B cell (primary cell): ENCODE measurements at regions of chr5 and their contacts with region 1.

Region 1: DNA sequence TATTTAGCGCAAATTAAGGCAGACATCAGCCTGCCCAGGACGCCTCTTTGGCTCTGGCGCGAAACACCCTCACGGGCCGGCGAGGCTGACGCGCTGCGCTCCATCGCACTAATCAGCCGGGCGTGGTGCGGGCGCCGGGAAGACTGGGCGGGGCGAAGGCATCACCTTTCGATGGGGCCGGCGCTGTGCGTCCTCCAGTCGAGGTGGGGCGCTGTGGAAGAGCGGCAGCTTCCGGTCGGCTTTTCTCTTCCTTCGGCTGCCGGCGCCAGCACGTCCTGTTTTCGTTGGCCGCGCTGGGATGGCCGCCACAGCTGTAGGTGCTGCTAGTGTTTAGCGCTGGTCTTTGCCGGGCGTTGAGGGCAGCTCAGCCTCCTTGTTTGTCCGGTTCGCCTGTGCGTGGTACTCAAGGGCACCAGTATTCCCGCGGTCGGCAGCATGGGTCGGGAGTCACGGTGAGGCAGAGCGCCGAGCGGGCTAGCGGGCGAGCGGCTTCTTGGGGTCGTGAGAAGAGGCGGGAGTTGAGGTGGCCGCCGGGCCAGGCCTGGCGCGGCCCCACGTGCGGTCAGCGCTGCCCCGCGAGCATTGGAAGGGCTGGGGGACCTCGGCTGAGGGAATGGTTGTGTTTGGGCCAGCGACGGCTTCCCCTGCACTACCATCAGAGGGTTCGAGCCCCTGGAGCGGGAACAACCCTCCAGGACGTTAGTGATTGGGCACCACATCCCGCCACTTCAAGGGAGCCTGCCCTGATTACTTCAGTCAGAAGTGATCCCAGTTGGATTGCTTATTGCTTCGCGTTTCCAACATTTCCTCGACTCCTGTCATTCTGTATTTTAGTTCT is at the start of gene DDX46:
- DNase-seq: peak; percentile 95
- ATAC-seq: peak; percentile 99
- H3K4me3 ChIP-seq: peak within 1 kb of the TSS; percentile 77 to 97 (median 86)
- H3K4me3 Mint-ChIP-seq: peak within 1 kb of the TSS; percentile 100
- H3K27ac ChIP-seq: peak within 1 kb of the TSS; percentile 54 to 80
- H3K27ac Mint-ChIP-seq: peak within 1 kb of the TSS; percentile 97
- H3K4me1 ChIP-seq: peaks cover 18 to 19% of the 10 kb centered on the region in 2 donors
- H3K4me1 Mint-ChIP-seq: peaks cover 36% of the 10 kb centered on the region
- H3K27me3 ChIP-seq: no peaks in the 10 kb centered on the region
- H3K27me3 Mint-ChIP-seq: no peaks in the 10 kb centered on the region
- CTCF ChIP-seq: peak; percentile 78
- total RNA-seq, gene DDX46: 75.7 and 80.9 TPM in 2 replicates

Region 2: DNA sequence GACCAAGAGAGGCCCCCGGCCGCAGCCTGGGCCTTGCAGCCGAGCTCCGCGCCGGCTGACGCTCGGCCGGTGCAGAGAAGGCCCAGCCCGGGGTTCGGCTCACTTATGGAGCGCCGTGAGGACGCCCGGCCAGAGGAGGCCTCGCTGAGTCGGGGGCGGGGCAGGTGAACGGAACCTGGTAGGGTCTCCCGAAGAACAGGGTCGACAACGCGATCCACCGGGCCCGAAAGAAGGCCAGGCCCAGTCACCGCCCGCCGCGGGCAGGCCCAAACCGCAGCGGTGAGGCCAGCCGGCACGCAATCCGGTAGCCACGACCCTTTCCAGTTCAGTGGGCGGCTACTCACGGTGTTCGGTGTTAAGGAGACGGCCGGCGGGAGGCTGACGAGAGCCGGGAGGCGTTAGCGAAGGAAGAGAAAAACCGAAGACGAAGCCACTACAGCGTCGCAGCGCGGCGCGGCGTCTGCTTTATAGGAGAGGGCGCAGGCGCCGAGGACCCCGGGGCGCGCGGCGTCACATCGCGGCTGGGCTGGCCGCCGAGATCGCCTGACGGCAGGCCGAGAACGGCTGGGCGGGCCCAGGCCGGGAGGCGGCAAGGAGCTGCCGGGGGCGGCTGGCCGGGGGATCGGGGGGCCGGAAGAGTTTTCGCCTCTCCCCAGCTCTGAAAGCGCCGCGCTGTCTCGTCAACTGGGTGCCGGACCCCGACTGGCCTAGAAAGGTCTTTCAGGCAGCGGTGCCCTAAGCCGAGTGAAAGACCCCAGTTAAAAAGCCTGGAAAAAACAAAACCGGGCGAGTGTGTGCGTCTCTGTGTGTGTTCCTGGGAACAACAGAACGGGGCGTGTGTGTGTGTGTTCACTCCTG is 582.0 kb before region 1 on chr5 and contains the start of gene SKP1:
- CTCF ChIA-PET with region 1: no interaction called
- POLR2A ChIA-PET with region 1: no interaction called
- intact Hi-C with region 1: loop called (anchors 1 kb)
- DNase-seq: peak; percentile 95
- ATAC-seq: peak; percentile 86
- H3K4me3 ChIP-seq: peak within 1 kb of the TSS; percentile 73 to 100 (median 93)
- H3K4me3 Mint-ChIP-seq: peak within 1 kb of the TSS; percentile 96
- H3K27ac ChIP-seq: peak within 1 kb of the TSS; percentile 98 to 100
- H3K27ac Mint-ChIP-seq: peak within 1 kb of the TSS; percentile 98
- H3K4me1 ChIP-seq: peaks cover 25 to 27% of the 10 kb centered on the region in 2 donors
- H3K4me1 Mint-ChIP-seq: peaks cover 29% of the 10 kb centered on the region
- H3K27me3 ChIP-seq: no peaks in the 10 kb centered on the region
- H3K27me3 Mint-ChIP-seq: no peaks in the 10 kb centered on the region
- CTCF ChIP-seq: no peak
- total RNA-seq, gene SKP1: 182 and 186 TPM in 2 replicates

Region 3: GRCh38 chr5:134637161-134637582 is 121.6 kb before region 1 on chr5:
- CTCF ChIA-PET with region 1: no interaction called
- POLR2A ChIA-PET with region 1: no interaction called
- intact Hi-C with region 1: loop called (anchors 1 kb)
- DNase-seq: no peak
- ATAC-seq: no peak
- H3K4me3 ChIP-seq: no peak overlapping the region
- H3K4me3 Mint-ChIP-seq: no peak overlapping the region
- H3K27ac ChIP-seq: no peak overlapping the region
- H3K27ac Mint-ChIP-seq: no peak overlapping the region
- H3K4me1 ChIP-seq: peaks cover under 1 to 4% of the 10 kb centered on the region in 2 donors
- H3K4me1 Mint-ChIP-seq: peaks cover 6% of the 10 kb centered on the region
- H3K27me3 ChIP-seq: no peaks in the 10 kb centered on the region
- H3K27me3 Mint-ChIP-seq: no peaks in the 10 kb centered on the region
- CTCF ChIP-seq: no peak

Region 4: GRCh38 chr5:134692722-134693121 is 66.0 kb before region 1 on chr5:
- CTCF ChIA-PET with region 1: no interaction called
- POLR2A ChIA-PET with region 1: no interaction called
- intact Hi-C with region 1: no loop called
- DNase-seq: no peak
- ATAC-seq: no peak
- H3K4me3 ChIP-seq: no peak overlapping the region
- H3K4me3 Mint-ChIP-seq: no peak overlapping the region
- H3K27ac ChIP-seq: no peak overlapping the region
- H3K27ac Mint-ChIP-seq: no peak overlapping the region
- H3K4me1 ChIP-seq: no peaks in the 10 kb centered on the region
- H3K4me1 Mint-ChIP-seq: no peaks in the 10 kb centered on the region
- H3K27me3 ChIP-seq: no peaks in the 10 kb centered on the region
- H3K27me3 Mint-ChIP-seq: no peaks in the 10 kb centered on the region
- CTCF ChIP-seq: no peak

Region 5: GRCh38 chr5:134794082-134794481 is 35.4 kb after region 1 on chr5:
- CTCF ChIA-PET with region 1: no interaction called
- POLR2A ChIA-PET with region 1: no interaction called
- intact Hi-C with region 1: no loop called
- DNase-seq: no peak
- ATAC-seq: no peak
- H3K4me3 ChIP-seq: no peak overlapping the region
- H3K4me3 Mint-ChIP-seq: no peak overlapping the region
- H3K27ac ChIP-seq: no peak overlapping the region
- H3K27ac Mint-ChIP-seq: no peak overlapping the region
- H3K4me1 ChIP-seq: no peaks in the 10 kb centered on the region
- H3K4me1 Mint-ChIP-seq: no peaks in the 10 kb centered on the region
- H3K27me3 ChIP-seq: no peaks in the 10 kb centered on the region
- H3K27me3 Mint-ChIP-seq: no peaks in the 10 kb centered on the region
- CTCF ChIP-seq: no peak

Region 6: DNA sequence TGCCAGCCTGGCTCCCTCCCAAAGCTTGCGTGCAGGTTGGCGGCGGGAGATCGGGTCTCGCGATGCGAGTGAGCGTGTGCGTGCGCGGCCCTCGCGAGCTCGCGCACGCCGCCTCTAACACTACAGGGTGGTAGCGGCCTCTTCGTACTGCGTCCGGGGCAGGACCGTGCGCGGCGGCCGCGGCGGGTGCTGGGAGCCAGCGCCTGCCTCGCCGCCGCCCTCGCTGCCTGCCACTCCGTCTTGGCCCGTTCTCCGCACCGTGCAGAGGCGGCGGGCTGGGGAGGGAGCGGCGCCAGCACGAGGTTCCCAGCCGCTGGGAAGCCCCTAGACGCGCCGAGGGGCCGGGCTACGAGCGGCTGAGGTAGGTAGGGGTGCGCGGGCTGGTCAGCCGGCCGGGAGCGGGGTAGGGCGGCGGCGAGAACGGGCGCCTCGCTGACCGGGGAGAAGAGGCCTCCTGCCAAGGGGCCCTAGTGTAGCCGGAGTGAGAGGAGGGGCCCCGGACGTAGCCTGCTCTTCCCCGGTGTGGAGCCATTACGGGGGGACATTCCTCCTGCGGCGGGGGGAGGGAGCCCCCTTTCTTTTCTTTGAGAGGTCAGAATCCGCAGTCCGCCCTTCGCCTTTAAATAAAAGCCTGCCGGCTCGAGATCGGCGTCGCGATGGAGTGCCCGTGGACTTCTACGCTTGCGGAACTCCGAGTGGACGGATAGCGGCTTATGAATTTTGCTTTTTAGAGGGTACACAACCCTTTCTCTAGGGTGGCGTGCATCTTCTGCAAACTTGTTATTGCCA is 87.3 kb after region 1 on chr5 and contains the start of gene C5orf24:
- CTCF ChIA-PET with region 1: interaction called, 6 read pairs
- POLR2A ChIA-PET with region 1: interaction called, 5 read pairs
- intact Hi-C with region 1: loop called (anchors 1 kb)
- DNase-seq: peak; percentile 97
- ATAC-seq: peak; percentile 91
- H3K4me3 ChIP-seq: peak within 1 kb of the TSS; percentile 84 to 93 (median 87)
- H3K4me3 Mint-ChIP-seq: peak within 1 kb of the TSS; percentile 95
- H3K27ac ChIP-seq: peak within 1 kb of the TSS; percentile 86 to 93
- H3K27ac Mint-ChIP-seq: peak within 1 kb of the TSS; percentile 95
- H3K4me1 ChIP-seq: peaks cover 17 to 21% of the 10 kb centered on the region in 2 donors
- H3K4me1 Mint-ChIP-seq: peaks cover 25% of the 10 kb centered on the region
- H3K27me3 ChIP-seq: no peaks in the 10 kb centered on the region
- H3K27me3 Mint-ChIP-seq: no peaks in the 10 kb centered on the region
- CTCF ChIP-seq: no peak
- total RNA-seq, gene C5orf24: 38.2 and 44.2 TPM in 2 replicates

Region 7: DNA sequence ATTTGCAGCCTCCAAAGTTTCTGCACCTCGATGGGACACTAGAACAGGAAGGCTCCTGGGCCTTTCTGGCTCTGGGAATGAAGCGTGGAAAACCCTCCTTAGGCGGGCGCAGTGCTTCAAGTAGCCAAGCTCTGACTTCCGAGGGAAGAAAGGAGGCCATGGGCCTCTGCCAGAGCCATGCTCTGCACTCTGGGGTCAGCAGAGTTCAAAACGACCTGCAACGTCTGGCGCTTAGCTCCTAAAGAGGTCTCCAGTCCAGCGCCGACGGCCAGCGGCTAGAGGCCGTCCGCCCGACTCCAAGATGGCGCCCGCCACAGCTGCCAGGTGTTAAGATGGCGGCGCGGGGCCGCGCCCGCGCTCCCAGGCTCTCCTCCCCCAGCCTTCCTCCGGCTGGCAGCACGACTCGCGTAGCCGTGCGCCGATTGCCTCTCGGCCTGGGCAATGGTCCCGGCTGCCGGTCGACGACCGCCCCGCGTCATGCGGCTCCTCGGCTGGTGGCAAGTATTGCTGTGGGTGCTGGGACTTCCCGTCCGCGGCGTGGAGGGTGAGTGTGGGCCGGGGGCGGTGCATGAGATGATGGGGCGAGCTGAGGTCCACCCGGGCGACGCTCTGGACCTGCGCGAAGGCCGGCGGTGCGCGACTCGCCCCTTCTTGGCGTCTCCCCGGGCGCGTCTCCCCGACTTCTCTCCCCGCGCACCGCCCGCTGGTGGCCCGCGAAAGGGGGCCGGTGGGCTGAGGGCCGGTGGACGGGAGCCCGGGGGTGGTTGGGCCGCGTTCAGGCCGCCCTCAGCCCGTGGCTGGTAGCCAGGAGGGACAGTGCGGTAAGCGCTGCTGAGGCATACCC is 115.5 kb after region 1 on chr5 and contains the start of gene TXNDC15:
- CTCF ChIA-PET with region 1: no interaction called
- POLR2A ChIA-PET with region 1: no interaction called
- intact Hi-C with region 1: loop called (anchors 1 kb)
- DNase-seq: peak; percentile 89
- ATAC-seq: peak; percentile 92
- H3K4me3 ChIP-seq: peak within 1 kb of the TSS; percentile 78 to 94 (median 88)
- H3K4me3 Mint-ChIP-seq: peak within 1 kb of the TSS; percentile 96
- H3K27ac ChIP-seq: peak within 1 kb of the TSS; percentile 91 to 95
- H3K27ac Mint-ChIP-seq: peak within 1 kb of the TSS; percentile 94
- H3K4me1 ChIP-seq: peaks cover 22 to 39% of the 10 kb centered on the region in 2 donors
- H3K4me1 Mint-ChIP-seq: peaks cover 37% of the 10 kb centered on the region
- H3K27me3 ChIP-seq: no peaks in the 10 kb centered on the region
- H3K27me3 Mint-ChIP-seq: no peaks in the 10 kb centered on the region
- CTCF ChIP-seq: no peak
- total RNA-seq, gene TXNDC15: 45.2 and 50.4 TPM in 2 replicates

Region 8: GRCh38 chr5:135063631-135064570 is 305.2 kb after region 1 on chr5:
- CTCF ChIA-PET with region 1: no interaction called
- POLR2A ChIA-PET with region 1: no interaction called
- intact Hi-C with region 1: no loop called
- DNase-seq: no peak
- ATAC-seq: no peak
- H3K4me3 ChIP-seq: no peak overlapping the region
- H3K4me3 Mint-ChIP-seq: no peak overlapping the region
- H3K27ac ChIP-seq: no peak overlapping the region
- H3K27ac Mint-ChIP-seq: no peak overlapping the region
- H3K4me1 ChIP-seq: no peaks in the 10 kb centered on the region
- H3K4me1 Mint-ChIP-seq: no peaks in the 10 kb centered on the region
- H3K27me3 ChIP-seq: peaks cover 0 to 30% (median 1%) of the 10 kb centered on the region in 4 experiments
- H3K27me3 Mint-ChIP-seq: peaks cover 28% of the 10 kb centered on the region
- CTCF ChIP-seq: no peak

Region 9: GRCh38 chr5:136560126-136560525 is 1801.4 kb after region 1 on chr5:
- CTCF ChIA-PET with region 1: no interaction called
- POLR2A ChIA-PET with region 1: no interaction called
- intact Hi-C with region 1: no loop called
- DNase-seq: no peak
- ATAC-seq: no peak
- H3K4me3 ChIP-seq: no peak overlapping the region
- H3K4me3 Mint-ChIP-seq: no peak overlapping the region
- H3K27ac ChIP-seq: no peak overlapping the region
- H3K27ac Mint-ChIP-seq: no peak overlapping the region
- H3K4me1 ChIP-seq: no peaks in the 10 kb centered on the region
- H3K4me1 Mint-ChIP-seq: no peaks in the 10 kb centered on the region
- H3K27me3 ChIP-seq: no peaks in the 10 kb centered on the region
- H3K27me3 Mint-ChIP-seq: no peaks in the 10 kb centered on the region
- CTCF ChIP-seq: no peak